A549 (cell line): ENCODE measurements at regions of chr20 and their contacts with region 1.

Region 1: GRCh38 chr20:62616728-62617621 is 25.3 kb upstream of the SLCO4A1 start:
- DNase-seq: peak; percentile 71 to 85
- ATAC-seq: peak; percentile 92 to 99
- H3K4me3 ChIP-seq: no peak overlapping the region
- H3K27ac ChIP-seq: no peak overlapping the region
- H3K4me1 ChIP-seq: peaks cover 16% of the 10 kb centered on the region; the same call in 2 of the 3 replicates
- CTCF ChIP-seq: peak; percentile 87
- EP300 ChIP-seq: no peak
- POLR2A ChIP-seq: no peak
- RAD21 ChIP-seq: peak; percentile 93

Region 2: GRCh38 chr20:62409931-62410745 is 206.8 kb before region 1 on chr20:
- CTCF ChIA-PET with region 1: interaction called, 22 read pairs
- POLR2A ChIA-PET with region 1: no interaction called
- DNase-seq: peak; percentile 49 to 51
- ATAC-seq: peak; percentile 27 to 47; a peak in 5 of 6 replicates
- H3K4me3 ChIP-seq: 0 out of 3 replicates have a peak overlapping the region, but pooled peaks have one; percentile 7
- H3K27ac ChIP-seq: peak overlapping the region in 1 of 2 experiments; percentile 30; a peak in 2 of 6 replicates
- H3K4me1 ChIP-seq: peaks cover 21% of the 10 kb centered on the region
- CTCF ChIP-seq: peak; percentile 61
- EP300 ChIP-seq: no peak
- POLR2A ChIP-seq: no peak
- RAD21 ChIP-seq: peak; percentile 56 to 64

Region 3: GRCh38 chr20:62508603-62509051 is 108.3 kb before region 1 on chr20:
- CTCF ChIA-PET with region 1: interaction called, 63 read pairs
- POLR2A ChIA-PET with region 1: no interaction called
- DNase-seq: peak; percentile 46 to 61
- ATAC-seq: peak; percentile 43 to 73; a peak in 5 of 6 replicates
- H3K4me3 ChIP-seq: no peak overlapping the region
- H3K27ac ChIP-seq: no peak overlapping the region
- H3K4me1 ChIP-seq: no peaks in the 10 kb centered on the region
- CTCF ChIP-seq: no peak
- EP300 ChIP-seq: no peak
- POLR2A ChIP-seq: no peak
- RAD21 ChIP-seq: no peak

Region 4: DNA sequence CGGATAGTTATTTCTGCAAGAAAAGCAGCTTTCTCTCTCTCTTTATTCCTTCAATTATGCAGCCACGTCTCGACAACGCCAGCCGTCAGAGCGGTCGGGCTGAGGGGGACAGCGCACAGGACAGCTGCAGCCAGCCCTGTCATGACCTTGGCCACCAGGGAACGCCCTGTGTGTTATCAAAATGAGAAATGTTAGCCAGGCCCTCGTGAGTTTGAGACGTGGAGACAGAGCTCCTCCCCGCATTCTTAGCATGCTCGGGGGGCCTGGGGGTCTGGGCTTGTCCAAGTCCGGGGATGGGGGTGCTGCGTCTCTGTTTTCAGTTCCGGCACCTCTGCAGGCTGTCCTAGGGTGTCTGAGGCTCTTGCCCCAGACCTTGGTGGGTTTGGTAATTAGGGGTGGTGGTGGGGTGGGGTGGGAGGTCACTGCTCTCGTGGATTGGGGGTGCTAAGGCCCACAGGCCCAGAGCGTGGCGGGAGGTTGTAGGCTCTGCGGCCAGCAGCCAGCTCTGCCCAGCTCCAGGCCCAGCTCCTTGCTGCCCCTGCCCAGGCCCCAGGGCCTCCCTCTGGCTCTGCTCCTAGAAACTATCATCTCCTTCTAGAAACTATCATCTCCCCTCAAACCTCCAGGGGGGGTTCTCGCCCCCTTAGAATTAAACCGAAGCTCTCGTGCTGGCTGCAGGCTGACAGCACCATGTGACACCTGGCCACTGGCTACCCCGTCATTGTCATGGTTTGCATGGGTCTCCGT is 86.9 kb before region 1 on chr20:
- CTCF ChIA-PET with region 1: interaction called, 26 read pairs
- POLR2A ChIA-PET with region 1: no interaction called
- DNase-seq: no peak
- ATAC-seq: no peak
- H3K4me3 ChIP-seq: no peak overlapping the region
- H3K27ac ChIP-seq: no peak overlapping the region
- H3K4me1 ChIP-seq: no peaks in the 10 kb centered on the region
- CTCF ChIP-seq: no peak
- EP300 ChIP-seq: no peak
- POLR2A ChIP-seq: no peak
- RAD21 ChIP-seq: no peak

Region 5: DNA sequence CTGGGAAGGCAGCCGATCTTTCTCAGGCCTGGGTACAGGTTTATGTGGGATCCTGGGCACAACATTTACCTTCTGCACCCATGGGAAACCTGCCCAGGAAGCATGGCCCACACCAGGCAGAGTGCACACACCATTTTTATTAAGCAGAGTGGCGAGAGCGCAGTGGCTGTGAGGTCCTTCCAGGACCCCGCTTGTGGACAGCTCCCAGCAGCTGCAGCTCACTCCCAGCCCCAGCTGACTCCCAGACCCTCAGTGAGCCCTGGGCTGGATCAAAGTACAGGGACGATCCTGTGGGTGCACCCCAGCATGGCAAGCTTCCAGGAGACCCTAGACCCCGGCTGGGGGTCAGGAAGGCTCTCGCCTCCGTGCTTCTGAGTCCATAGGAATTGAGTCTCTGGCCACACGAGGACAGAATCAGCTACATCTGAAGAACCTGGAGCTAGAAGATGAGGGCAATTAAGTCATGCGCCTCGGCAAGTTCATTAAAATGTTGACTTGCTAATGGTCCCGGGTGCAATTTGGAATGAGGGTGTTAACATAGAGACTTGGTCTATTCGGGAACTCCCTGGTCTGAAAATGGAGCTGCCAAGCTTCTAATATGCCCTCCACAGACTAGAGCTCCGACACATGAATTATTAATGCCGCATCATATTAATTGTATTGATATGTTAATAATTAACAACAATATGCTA is 40.0 kb before region 1 on chr20:
- CTCF ChIA-PET with region 1: interaction called, 24 read pairs
- POLR2A ChIA-PET with region 1: no interaction called
- DNase-seq: no peak
- ATAC-seq: 0 out of 6 replicates have a peak, but pooled peaks of 1 of the 2 experiments have one; percentile 14
- H3K4me3 ChIP-seq: no peak overlapping the region
- H3K27ac ChIP-seq: no peak overlapping the region
- H3K4me1 ChIP-seq: peaks cover 6% of the 10 kb centered on the region; the same call in 1 of the 3 replicates
- CTCF ChIP-seq: no peak
- EP300 ChIP-seq: no peak
- POLR2A ChIP-seq: no peak
- RAD21 ChIP-seq: no peak

Region 6: GRCh38 chr20:62603021-62603906 is 13.7 kb before region 1 on chr20:
- CTCF ChIA-PET with region 1: interaction called, 37 read pairs
- POLR2A ChIA-PET with region 1: no interaction called
- DNase-seq: no peak
- ATAC-seq: 0 out of 6 replicates have a peak, but pooled peaks of 1 of the 2 experiments have one; percentile 17
- H3K4me3 ChIP-seq: no peak overlapping the region
- H3K27ac ChIP-seq: no peak overlapping the region
- H3K4me1 ChIP-seq: peaks cover 9% of the 10 kb centered on the region; the same call in 2 of the 3 replicates
- CTCF ChIP-seq: no peak
- EP300 ChIP-seq: no peak
- POLR2A ChIP-seq: no peak
- RAD21 ChIP-seq: no peak